Dorsolateral prefrontal cortex (tissue), 120 donors: ENCODE measurements at regions of chr7 and their contacts with region 1.

Region 1: GRCh38 chr7:111931016-111931517 is 275.1 kb downstream of the DOCK4 start:
- DNase-seq: no peak
- H3K4me3 ChIP-seq: no peak overlapping the region
- H3K27ac ChIP-seq: peak overlapping the region in 54 of 59 donors; percentile 10 to 84 (median 61)
- H3K27me3 ChIP-seq: no peaks in the 10 kb centered on the region
- CTCF ChIP-seq: no peak

Region 2: DNA sequence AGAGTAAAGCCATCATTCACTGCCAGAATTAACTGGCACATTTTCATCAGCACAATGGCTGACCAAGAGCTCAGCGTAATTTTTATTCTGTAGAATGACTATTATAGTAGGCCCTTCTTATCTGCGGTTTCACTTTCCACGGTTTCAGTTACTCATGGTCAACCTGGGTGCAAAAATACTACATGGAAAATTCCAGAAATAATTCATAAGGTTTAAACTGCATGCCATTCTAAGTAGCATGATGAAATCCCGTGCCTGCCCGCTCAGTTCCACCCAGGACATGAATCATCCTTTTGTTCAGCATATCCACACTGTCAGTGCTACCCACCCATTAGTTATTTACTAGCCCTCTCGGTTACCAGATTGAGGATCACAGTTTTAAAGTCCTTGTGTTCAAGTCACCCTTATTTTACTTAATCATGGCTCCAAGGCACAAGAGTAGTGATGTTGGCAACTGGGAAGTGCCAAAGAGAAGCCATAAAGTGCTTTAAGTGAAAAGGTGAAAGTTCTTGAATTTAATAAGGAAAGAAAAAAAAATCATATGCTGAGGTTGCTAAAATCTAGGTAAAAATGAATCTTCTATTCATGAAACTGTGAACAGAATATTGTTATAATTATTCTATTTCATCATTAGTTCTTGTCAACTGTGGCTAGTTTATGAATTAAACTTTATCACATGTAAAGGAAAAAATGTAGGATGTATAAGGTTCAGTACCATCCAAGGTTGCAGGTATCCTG is 70.2 kb after region 1 on chr7:
- intact Hi-C with region 1: loop called in 1 of 2 experiments (anchors 2 kb)
- DNase-seq: peak in 3 of 10 donors; percentile 43 to 57 (median 53)
- H3K4me3 ChIP-seq: peak overlapping the region in 29 of 59 donors; percentile 0 to 53 (median 26)
- H3K27ac ChIP-seq: peak overlapping the region in 55 of 59 donors; percentile 12 to 93 (median 75)
- H3K27me3 ChIP-seq: no peaks in the 10 kb centered on the region
- CTCF ChIP-seq: no peak

Region 3: DNA sequence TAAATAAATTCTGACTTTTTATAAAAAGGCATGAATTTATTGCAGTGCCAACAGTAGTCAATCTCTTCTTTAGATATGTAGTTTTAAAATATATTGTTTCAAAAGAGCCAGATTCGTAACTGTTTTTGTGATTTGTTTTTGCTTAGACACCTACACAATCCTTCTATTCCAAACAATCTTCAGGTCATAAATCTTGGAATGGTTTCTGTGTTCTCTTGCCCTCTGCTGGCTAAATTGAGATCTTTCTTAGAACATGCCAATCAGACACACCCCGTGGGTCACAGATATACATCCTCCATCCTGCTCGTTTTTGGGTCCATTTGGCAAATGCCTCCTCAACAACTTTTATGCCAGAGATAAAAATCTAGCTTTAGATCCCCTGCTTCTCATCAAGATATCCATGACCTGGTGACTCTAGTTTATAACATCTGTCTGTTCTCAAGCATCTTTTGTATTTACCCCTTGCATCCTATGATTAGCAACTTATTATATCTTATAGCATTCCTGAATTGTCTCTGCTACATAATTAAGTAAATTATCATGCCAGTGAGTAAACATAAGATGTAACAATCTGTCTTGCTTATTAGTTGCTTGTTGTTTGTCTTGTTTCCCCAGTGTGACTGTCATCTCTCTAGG is 483.9 kb after region 1 on chr7:
- intact Hi-C with region 1: loop called in 1 of 2 experiments (anchors 10 kb)
- DNase-seq: no peak
- H3K4me3 ChIP-seq: no peak overlapping the region
- H3K27ac ChIP-seq: no peak overlapping the region
- H3K27me3 ChIP-seq: no peaks in the 10 kb centered on the region
- CTCF ChIP-seq: peak; percentile 27 to 76 (median 60)